ENCODE measurements at regions of chr17 and their contacts with region 1.

Region 1: DNA sequence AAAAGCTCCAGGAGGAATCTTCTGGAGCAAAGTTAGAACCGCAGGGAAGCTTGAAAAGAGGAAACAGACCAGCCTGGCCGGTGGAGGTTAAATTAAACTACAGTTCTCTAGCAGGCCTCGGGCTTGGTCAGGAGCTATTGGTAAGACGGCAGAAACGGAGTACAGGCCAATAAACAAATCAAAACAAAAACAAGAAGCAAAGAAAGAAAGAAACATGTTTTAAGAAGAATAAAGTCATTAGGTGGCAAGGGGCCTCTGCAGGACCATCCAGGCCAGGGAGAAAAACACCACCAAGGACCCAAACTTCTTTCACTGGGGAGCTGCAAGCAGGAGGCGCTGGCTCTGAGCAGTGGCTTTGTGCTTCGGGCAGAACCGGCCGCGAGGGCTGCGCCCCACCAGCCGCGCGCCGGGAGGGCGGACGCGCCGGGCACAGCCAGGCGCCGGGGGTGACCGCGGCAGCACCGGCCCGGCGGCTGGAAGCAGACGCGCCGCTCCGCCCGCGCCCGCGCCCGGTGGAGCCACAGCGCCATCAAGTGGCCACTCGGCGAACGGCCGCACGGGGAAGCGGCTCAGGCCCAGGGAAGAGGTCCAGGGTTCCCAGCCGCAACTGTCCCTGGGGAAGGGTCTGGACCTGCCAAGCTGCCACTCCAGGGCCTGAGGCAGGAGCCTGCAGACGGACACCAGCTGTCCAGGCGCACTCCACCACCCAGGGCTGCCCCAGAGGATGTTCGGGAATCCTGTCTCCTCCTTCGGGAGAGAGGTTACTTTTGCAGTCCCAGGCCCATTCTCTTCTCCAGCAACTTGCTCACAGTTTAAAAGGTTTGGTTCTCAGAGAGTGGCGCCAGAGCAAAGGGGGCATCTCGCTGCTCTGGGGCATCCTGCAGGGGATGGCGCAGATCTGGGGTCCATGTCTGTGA is 419.4 kb downstream of the SOX9 start:
- DNase-seq: peak; percentile 71
- H3K4me3 ChIP-seq: no peak overlapping the region
- H3K27ac ChIP-seq: no peak overlapping the region
- H3K4me1 ChIP-seq: no peaks in the 10 kb centered on the region
- CTCF ChIP-seq: peak; percentile 80

Region 2: GRCh38 chr17:70636517-70637133 is 1903.6 kb before region 1 on chr17:
- CTCF ChIA-PET with region 1: no interaction called
- POLR2A ChIA-PET with region 1: no interaction called
- intact Hi-C with region 1: loop called (anchors 2 kb)
- DNase-seq: peak; percentile 48
- H3K4me3 ChIP-seq: no peak overlapping the region
- H3K27ac ChIP-seq: no peak overlapping the region
- H3K4me1 ChIP-seq: no peaks in the 10 kb centered on the region
- CTCF ChIP-seq: peak; percentile 93

Region 3: GRCh38 chr17:70767102-70767701 is 1773.0 kb before region 1 on chr17:
- CTCF ChIA-PET with region 1: no interaction called
- POLR2A ChIA-PET with region 1: no interaction called
- intact Hi-C with region 1: loop called (anchors 1 kb)
- DNase-seq: peak; percentile 43
- H3K4me3 ChIP-seq: no peak overlapping the region
- H3K27ac ChIP-seq: no peak overlapping the region
- H3K4me1 ChIP-seq: no peaks in the 10 kb centered on the region
- CTCF ChIP-seq: peak; percentile 96

Region 4: DNA sequence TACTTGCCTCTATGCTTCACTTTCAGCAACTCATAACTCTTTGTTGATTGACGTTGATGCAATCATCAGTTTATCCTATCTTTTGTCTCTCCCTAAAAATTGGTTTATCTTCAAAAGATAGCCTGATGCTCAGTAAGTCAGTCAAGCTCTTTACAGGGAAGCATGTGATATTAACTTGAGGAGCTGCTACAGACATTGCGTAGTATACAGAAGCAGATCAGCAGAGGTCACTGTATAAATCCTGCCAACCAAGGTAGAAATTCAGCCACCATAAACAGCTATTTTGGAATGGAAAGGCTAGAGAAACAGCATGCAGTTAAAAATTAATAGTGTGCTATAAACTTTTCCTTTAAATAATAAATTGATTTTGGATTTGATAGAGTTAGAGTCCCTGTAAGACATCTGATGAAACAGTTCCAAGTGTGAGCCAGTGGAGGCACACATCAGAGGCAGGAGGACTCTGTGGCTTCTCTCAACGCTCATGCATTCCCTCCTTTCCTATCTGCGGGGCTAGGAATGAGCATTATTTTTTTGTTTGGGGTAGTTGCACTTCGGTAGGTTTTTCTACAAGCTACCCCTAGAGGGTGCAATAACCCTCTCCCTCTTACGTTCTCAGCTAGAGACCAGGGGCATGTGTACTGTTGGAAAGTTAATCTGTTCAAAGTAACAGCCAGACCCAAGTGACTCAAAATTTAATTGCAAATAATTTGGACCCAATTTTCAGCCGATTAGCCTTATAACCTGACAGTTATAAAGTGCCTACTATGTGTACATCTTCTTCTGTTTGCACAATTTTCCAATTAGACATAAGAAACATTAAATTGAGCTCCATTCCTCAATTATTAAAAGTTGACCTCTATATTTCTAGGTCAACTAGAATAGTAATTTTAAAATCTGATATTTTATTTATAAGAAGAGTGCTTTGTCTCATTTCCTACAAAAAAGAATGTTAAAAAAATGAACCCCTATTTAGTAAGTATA is 1067.1 kb before region 1 on chr17:
- CTCF ChIA-PET with region 1: no interaction called
- POLR2A ChIA-PET with region 1: no interaction called
- intact Hi-C with region 1: loop called (anchors 1 kb)
- DNase-seq: peak; percentile 74
- H3K4me3 ChIP-seq: no peak overlapping the region
- H3K27ac ChIP-seq: no peak overlapping the region
- H3K4me1 ChIP-seq: no peaks in the 10 kb centered on the region
- CTCF ChIP-seq: peak; percentile 98

Region 5: GRCh38 chr17:72118335-72119076 is 421.7 kb before region 1 on chr17:
- CTCF ChIA-PET with region 1: no interaction called
- POLR2A ChIA-PET with region 1: no interaction called
- intact Hi-C with region 1: loop called (anchors 10 kb)
- DNase-seq: peak; percentile 54
- H3K4me3 ChIP-seq: no peak overlapping the region
- H3K27ac ChIP-seq: no peak overlapping the region
- H3K4me1 ChIP-seq: no peaks in the 10 kb centered on the region
- CTCF ChIP-seq: peak; percentile 100

Measured in OCI-LY7 (cell line).